AG04450 (cell line): ENCODE measurements at regions of chr17 and their contacts with region 1.

Region 1: DNA sequence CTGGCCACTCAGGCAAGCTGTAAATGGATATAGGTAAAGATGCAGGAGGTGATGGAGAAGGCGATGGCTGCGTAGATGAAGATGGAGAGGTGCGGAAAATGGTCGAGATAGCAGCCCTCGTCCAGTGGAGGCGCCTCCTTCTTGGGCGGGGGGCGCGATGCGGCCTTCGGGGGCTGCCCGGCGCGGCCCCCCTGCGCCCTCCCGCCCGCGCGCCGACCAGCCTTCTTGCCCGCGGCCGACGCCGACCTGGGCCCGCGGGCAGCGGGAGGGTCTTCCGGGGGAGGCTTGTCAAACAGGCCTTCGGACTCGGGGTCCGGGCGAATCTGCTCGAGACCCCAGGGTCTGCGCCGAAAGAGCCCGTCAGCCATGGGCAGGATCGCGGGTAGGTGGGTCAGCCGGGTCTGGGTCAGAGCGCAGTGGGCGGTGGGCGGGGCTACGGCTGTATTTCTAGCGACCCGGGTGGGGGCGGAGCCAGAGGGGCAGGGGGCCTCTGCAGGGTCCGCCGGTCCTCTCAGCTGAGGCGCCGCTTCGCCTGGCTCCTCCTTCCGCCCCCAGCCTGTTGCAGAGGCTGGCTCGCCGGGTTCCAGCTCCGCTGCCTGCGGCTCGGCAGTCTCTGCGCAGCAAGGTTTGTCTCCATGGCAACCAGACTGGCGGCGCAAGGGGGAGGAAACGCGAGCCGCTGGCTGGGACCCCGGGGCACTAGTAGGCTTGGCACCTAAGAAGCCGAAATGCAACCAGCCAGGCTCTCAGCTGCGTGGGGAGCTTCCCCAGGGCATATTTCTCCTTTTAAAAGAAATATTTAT is 14.4 kb downstream of the MIS12 start:
- DNase-seq: peak; percentile 88
- H3K4me3 ChIP-seq: peak overlapping the region; percentile 83
- H3K27ac ChIP-seq: peak overlapping the region; percentile 52
- H3K27me3 ChIP-seq: no peaks in the 10 kb centered on the region
- CTCF ChIP-seq: no peak

Region 2: GRCh38 chr17:5486204-5487124 is 14.3 kb before region 1 on chr17 and contains the start of gene MIS12:
- CTCF ChIA-PET with region 1: no interaction called
- POLR2A ChIA-PET with region 1: interaction called, 21 read pairs
- DNase-seq: peak; percentile 98
- H3K4me3 ChIP-seq: peak within 1 kb of the TSS; percentile 91
- H3K27ac ChIP-seq: peak within 1 kb of the TSS; percentile 99
- H3K27me3 ChIP-seq: no peaks in the 10 kb centered on the region
- CTCF ChIP-seq: no peak
- polyA plus RNA-seq, gene MIS12: 10.0 and 13.7 TPM in 2 replicates

Region 3: DNA sequence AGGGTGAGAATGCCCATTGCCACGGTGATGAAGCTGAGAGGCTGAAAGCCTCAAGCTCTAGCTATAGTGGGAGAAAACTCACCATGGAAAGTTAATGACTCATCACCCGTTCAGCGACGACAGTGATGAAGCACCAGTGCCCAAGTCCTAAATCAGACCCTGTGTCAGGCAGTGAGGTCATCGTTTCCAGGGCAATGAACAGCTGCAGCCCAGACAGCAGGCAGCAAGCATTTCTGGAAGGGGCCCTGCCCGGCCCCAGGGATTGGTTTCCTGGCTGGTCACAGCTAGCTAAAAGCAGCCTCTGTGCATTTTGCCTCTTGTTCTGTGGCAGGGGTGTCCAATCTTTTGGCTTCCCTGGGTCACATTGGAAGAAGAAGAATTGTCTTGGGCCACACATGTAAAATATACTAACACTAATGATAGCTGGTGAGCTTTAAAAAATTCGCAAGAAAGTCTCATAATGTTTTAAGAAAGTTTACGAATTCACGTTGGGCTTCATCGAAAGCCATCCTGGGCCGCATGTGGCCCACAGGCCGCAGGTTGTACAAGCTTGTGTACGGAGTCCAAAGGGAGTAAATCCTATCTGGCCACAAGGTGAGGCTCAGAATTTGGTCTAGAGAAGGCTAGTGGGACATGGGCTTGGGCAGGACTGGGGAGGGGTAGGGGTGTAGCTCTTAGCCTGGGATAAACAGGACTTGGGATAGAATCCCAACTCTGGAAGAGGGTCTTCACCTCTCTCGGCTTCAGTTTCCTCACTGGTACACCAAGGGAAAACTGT is 26.2 kb after region 1 on chr17:
- CTCF ChIA-PET with region 1: no interaction called
- POLR2A ChIA-PET with region 1: interaction called, 14 read pairs
- DNase-seq: peak; percentile 91
- H3K4me3 ChIP-seq: no peak overlapping the region
- H3K27ac ChIP-seq: peak overlapping the region; percentile 81
- H3K27me3 ChIP-seq: no peaks in the 10 kb centered on the region
- CTCF ChIP-seq: no peak

Region 4: DNA sequence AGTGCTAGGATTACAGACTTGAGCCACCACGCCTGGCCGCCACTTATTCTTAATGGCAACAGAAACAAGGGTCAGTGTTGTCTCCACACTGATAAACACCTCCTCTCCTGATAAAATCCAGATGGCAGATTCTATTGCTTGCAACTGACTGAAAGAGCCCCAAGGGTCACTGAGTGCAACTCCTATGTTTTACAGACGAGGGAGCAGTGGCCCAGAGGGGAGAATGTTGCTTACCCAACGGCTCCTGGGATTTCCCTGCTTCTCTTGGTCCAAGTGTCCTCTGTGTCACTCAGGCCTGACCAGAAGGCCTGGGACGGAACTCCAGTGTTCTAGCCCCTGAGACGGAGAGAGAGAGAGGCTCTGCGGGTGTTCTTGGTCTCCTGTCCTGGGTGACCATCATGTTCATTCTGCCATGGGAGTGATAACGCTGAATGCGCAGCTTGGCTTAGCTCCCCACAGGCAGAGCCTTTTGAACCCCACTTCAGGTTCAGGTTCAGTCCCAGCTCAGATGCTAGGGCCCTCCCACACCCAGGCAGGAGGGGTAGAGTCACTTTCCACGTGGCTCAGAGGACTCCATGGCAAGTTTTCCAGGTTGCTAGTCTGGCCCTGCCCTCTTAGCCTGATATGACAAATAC is 160.8 kb after region 1 on chr17:
- CTCF ChIA-PET with region 1: no interaction called
- POLR2A ChIA-PET with region 1: no interaction called
- DNase-seq: no peak
- H3K4me3 ChIP-seq: no peak overlapping the region
- H3K27ac ChIP-seq: no peak overlapping the region
- H3K27me3 ChIP-seq: peaks cover 2% of the 10 kb centered on the region
- CTCF ChIP-seq: no peak